Prostate gland (tissue), 2 donors: ENCODE measurements at regions of chrX and their contacts with region 1.

Region 1: DNA sequence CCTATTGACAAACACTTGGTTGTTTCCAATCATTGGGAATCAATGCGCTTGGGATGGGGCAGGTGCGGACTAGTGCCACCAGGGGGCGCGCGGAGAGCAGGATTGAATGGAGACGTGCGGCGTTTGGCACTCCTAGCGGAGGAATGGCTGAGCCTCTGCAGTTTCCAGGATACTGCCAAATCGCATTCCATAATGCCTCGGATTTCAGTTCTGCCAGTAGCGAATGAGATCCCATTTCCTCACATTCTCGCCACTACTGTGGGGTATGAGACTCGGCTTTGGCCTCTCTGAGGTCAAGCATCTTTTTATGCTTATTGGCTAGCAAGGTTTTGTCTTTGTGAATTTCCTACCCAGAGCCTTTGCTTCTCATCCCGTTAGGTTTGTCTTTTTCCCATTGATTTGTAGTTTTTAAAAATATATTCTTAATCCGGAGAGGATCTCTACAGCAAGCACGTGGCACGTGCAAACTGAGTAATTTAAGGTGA is 28.7 kb downstream of the CLDN34 start:
- DNase-seq: peak; percentile 69
- H3K4me3 ChIP-seq: no peak overlapping the region
- H3K27ac ChIP-seq: no peak overlapping the region
- H3K4me1 ChIP-seq: no peaks in the 10 kb centered on the region
- H3K27me3 ChIP-seq: no peaks in the 10 kb centered on the region
- CTCF ChIP-seq: peak; percentile 80 to 98 (median 92)
- POLR2A ChIP-seq: no peak

Region 2: GRCh38 chrX:9885150-9885549 is 110.7 kb before region 1 on chrX:
- intact Hi-C with region 1: loop called (anchors 10 kb)
- DNase-seq: peak; percentile 35
- H3K4me3 ChIP-seq: no peak overlapping the region
- H3K27ac ChIP-seq: no peak overlapping the region
- H3K4me1 ChIP-seq: no peaks in the 10 kb centered on the region
- H3K27me3 ChIP-seq: no peaks in the 10 kb centered on the region
- CTCF ChIP-seq: peak in 2 of 4 experiments; percentile 33 to 52
- POLR2A ChIP-seq: no peak